ENCODE measurements at regions of chr11 and their contacts with region 1.

Region 1: DNA sequence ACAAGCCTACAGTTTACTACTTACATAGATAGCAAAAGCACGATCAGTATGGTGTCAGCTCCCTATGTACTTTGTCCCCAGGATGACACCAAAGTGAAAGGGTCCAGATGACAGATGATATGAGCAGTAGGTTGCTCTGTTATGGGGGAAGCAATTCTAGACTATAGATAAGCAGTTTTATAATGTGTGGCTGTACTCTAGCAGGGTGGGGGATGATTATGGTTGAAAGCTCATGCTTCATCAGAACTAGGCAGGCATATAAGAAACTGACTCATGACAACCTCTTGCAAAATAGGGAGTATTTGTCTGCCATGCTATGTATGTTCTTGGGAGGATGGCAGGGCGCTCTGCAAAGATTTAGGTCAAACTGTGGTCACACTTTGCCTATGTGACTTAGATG is 158.2 kb upstream of the ZBED5 start:
- DNase-seq: no peak
- H3K4me3 ChIP-seq: no peak overlapping the region
- H3K27ac ChIP-seq: no peak overlapping the region
- H3K4me1 ChIP-seq: no peaks in the 10 kb centered on the region
- H3K27me3 ChIP-seq: peaks cover 0 to 2% of the 10 kb centered on the region in 2 donors
- CTCF ChIP-seq: no peak
- POLR2A ChIP-seq: no peak

Region 2: DNA sequence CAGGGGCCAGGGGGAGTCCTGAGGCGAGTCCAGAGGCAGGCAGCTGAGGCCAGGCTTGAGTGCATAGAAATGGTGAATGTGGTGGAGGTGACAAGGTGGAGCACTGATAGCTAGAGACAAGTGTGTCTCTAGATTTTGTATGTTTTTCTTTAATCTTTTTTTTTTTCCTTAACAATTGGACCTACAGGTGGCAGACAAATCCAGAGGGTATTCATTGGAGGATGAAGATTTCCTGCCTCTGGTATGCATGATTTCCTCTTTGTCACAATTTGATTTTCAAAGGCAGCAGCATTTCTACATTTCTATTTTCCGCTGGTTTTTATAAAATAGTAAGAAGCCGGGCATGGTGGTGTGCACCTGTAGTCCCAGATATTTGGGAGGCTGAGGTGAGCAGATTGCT is 1040.1 kb after region 1 on chr11:
- intact Hi-C with region 1: loop called (anchors 5 kb)
- DNase-seq: no peak
- H3K4me3 ChIP-seq: no peak overlapping the region
- H3K27ac ChIP-seq: no peak overlapping the region
- H3K4me1 ChIP-seq: no peaks in the 10 kb centered on the region
- H3K27me3 ChIP-seq: no peaks in the 10 kb centered on the region
- CTCF ChIP-seq: no peak
- POLR2A ChIP-seq: no peak

Region 3: DNA sequence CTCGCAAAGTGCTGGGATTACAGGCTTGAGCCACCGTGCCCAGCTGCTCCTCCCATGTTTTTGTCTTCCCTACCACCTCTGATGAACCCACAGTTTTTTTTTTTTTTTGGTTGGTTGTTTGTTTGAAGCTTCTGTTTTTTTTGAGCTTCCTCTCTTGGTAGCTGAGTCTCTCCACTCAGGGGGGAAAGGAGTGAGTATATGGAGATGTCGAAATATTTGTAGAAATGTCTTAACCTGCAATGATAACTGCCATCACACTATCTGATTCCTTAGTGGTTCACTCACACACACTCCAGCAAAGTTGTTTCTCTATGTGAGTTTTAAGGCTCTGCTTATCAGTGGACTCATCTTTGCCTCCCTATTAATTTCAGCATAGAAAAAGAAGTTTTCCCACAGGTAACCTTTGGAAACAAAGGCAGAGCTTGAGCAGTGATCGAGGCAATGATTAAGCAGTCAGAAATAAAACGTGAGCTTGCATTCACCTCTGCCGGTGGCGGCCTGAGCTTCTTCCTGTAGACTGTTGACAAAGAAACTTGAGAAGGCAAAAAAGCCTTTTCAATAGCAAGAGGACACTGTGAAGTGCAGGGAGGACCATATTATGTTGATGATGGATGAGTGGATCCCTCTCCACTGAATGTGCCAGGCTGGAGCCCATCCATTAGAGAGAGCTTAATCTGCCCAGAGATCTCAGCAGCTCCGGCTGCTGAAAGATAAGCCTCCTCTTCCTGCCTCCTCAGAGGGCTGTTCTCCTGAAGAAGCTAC is 1964.0 kb after region 1 on chr11:
- intact Hi-C with region 1: no loop called
- DNase-seq: no peak
- H3K4me3 ChIP-seq: no peak overlapping the region
- H3K27ac ChIP-seq: no peak overlapping the region
- H3K4me1 ChIP-seq: no peaks in the 10 kb centered on the region
- H3K27me3 ChIP-seq: no peaks in the 10 kb centered on the region
- CTCF ChIP-seq: no peak
- POLR2A ChIP-seq: no peak